Gastrocnemius medialis (tissue), 4 donors: ENCODE measurements at regions of chr6 and their contacts with region 1.

Region 1: DNA sequence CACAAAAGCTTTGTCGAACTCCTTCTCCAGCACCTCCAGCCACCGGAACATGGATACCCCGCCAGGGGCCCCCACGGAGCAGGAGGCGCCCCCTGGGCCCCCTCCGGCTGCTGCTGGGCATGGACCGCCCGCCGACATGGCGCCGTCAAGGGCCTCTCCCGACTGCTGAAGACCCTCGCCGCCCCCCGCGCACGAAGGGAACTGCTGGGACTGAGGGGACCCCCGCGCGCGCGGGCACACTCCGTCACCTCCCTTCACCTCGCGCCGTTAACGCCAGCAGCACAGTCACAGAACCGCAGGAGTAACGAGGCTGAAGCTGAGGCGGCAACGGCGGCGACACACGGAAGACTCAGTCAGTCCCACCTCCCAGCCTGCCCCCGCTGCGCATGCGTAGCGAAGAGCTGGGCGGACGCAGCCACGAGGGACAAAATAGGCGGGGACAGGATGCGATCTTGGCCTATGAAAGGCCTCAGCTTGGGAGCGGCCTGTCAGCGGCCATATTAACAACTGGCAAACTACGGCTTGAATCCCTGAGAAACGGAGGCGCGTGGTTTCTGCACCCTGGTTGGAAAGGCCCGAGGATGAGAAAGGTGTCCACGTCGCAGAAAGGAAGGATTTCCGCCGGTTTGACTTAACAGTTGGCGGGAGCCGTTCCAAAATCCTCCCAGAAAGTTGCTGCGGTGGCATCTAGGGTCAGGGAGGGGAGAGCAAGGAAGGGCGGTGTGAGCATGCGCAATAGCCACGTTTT is at the start of gene GOPC:
- DNase-seq: peak; percentile 95 to 97
- ATAC-seq: peak; percentile 97 to 99
- H3K4me3 ChIP-seq: peak within 1 kb of the TSS; percentile 87 to 99 (median 92)
- H3K27ac ChIP-seq: peak within 1 kb of the TSS; percentile 93 to 94 (median 93)
- H3K4me1 ChIP-seq: peaks cover 22 to 27% of the 10 kb centered on the region in 2 donors
- H3K27me3 ChIP-seq: no peaks in the 10 kb centered on the region
- CTCF ChIP-seq: peak in 2 of 5 experiments; percentile 10 to 19
- POLR2A ChIP-seq: peak; percentile 80 to 85
- total RNA-seq, gene GOPC: 12.0 to 19.3 (median 13.6) TPM

Region 2: GRCh38 chr6:117346142-117346930 is 256.0 kb before region 1 on chr6:
- in situ Hi-C with region 1: loop called in 3 of 4 experiments (anchors 10 to 25 kb)
- intact Hi-C with region 1: loop called (anchors 2 kb)
- DNase-seq: no peak
- ATAC-seq: peak; percentile 33 to 44
- H3K4me3 ChIP-seq: peak overlapping the region in 2 of 4 donors; percentile 11 to 18
- H3K27ac ChIP-seq: no peak overlapping the region
- H3K4me1 ChIP-seq: no peaks in the 10 kb centered on the region
- H3K27me3 ChIP-seq: no peaks in the 10 kb centered on the region
- CTCF ChIP-seq: peak in 4 of 5 experiments; percentile 23 to 55 (median 53)
- POLR2A ChIP-seq: no peak

Region 3: DNA sequence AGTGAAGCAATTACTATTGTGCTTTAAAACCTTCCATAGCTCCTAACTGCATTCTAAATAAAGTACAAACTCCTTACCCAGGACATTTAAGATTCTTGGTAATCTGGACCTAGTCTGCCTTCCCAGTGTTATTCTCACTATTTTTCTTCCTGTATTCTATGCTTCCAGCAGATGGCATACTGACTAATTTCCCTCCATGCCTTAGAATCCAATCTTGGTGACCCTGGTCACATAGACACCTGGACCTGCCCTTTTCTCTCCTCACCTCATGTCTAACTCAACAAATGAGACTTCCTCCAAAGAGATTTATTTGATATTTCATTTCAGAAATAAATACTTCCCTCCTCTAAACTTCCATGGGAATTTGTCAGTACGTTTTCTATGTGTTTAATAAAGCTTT is 202.4 kb before region 1 on chr6:
- in situ Hi-C with region 1: no loop called
- intact Hi-C with region 1: loop called (anchors 1 kb)
- DNase-seq: no peak
- ATAC-seq: no peak
- H3K4me3 ChIP-seq: no peak overlapping the region
- H3K27ac ChIP-seq: no peak overlapping the region
- H3K4me1 ChIP-seq: peaks cover 3 to 11% of the 10 kb centered on the region in 2 donors
- H3K27me3 ChIP-seq: no peaks in the 10 kb centered on the region
- CTCF ChIP-seq: no peak
- POLR2A ChIP-seq: no peak

Region 4: DNA sequence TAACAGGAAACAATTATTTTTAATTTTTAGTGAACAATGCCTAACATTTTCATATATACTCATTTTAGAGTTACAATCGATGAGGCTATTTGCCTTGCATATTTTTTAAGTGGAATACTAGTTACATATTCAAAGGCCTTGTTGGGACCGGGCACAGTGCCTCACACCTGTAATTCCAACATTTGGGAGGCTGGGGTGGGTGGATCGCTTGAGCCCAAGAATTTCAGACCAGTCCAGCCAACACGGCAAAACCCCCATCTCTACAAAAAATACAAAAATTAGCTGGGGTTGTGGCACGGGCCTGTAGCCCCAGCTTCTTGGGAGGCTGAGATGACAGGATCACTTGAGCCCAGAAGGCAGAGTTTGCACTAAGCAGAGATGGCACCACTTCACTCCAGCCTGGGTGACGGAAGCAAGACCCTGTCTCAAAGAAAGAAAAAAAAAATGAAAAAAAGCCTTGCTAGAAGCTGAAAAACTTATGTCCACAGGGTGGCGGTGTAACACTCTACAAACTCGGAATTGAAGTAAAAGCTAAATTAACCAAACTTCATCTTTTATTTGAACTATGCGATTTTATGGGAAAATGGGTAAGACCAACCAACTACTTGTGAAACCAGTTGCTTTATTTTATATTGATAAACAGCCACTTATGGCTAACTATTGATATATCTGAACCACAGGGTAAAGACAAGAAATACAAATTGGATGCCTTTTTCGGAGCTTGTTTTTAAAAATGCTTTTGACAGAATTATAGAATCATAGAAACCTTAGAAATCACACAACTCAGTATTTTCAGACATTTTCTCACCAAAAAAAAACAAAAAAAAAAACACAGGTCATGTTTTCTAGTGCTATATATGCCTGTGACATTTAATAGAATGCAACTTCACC is 152.5 kb before region 1 on chr6:
- in situ Hi-C with region 1: no loop called
- intact Hi-C with region 1: loop called (anchors 1 kb)
- DNase-seq: peak; percentile 6 to 12
- ATAC-seq: no peak
- H3K4me3 ChIP-seq: no peak overlapping the region
- H3K27ac ChIP-seq: no peak overlapping the region
- H3K4me1 ChIP-seq: peaks cover 0 to 6% of the 10 kb centered on the region in 2 donors
- H3K27me3 ChIP-seq: no peaks in the 10 kb centered on the region
- CTCF ChIP-seq: peak; percentile 52 to 78 (median 66)
- POLR2A ChIP-seq: no peak

Region 5: DNA sequence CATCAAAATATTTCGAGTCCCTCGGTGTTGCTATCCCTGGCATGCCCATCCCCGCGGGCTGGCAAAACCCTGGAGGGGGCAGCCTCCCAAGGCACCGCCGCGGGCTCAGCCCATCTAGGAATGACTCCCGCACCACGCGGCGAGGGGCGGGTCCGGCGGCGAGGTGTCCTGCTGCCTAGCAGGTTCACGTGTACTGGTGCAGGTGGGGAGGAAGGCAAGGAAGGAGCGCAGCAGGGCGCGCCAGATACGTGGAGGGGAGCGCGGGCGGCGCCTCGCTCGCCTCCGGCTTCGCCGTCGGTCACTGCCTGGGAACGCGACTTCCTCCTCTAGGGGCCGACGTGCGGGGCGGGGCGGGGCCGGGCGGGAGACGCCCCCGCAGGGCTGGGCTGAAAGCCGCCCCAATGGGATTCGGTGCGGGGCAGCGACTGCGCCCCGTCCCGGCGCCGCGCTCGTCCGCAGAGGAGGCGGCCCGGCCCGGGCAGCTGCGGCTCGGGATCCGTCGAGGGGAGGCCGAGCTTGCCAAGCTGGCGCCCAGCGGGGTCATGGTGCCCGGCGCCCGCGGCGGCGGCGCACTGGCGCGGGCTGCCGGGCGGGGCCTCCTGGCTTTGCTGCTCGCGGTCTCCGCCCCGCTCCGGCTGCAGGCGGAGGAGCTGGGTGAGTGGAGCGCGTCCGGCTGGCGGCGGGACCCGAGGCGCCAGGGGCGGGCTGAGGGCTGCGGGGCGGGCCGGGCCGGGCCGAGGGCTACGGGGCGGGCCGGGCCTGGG is 119.9 kb before region 1 on chr6 and contains the start of gene DCBLD1:
- in situ Hi-C with region 1: no loop called
- intact Hi-C with region 1: loop called (anchors 2 kb)
- DNase-seq: peak; percentile 32 to 61
- ATAC-seq: peak; percentile 73 to 83
- H3K4me3 ChIP-seq: peak within 1 kb of the TSS; percentile 65 to 95 (median 82)
- H3K27ac ChIP-seq: peak within 1 kb of the TSS; percentile 89 to 92 (median 91)
- H3K4me1 ChIP-seq: peaks cover 13 to 19% of the 10 kb centered on the region in 2 donors
- H3K27me3 ChIP-seq: no peaks in the 10 kb centered on the region
- CTCF ChIP-seq: peak in 1 of 5 experiments; percentile 26
- POLR2A ChIP-seq: peak; percentile 52 to 75
- total RNA-seq, gene DCBLD1: 4.3 to 8.1 (median 5.2) TPM

Region 6: DNA sequence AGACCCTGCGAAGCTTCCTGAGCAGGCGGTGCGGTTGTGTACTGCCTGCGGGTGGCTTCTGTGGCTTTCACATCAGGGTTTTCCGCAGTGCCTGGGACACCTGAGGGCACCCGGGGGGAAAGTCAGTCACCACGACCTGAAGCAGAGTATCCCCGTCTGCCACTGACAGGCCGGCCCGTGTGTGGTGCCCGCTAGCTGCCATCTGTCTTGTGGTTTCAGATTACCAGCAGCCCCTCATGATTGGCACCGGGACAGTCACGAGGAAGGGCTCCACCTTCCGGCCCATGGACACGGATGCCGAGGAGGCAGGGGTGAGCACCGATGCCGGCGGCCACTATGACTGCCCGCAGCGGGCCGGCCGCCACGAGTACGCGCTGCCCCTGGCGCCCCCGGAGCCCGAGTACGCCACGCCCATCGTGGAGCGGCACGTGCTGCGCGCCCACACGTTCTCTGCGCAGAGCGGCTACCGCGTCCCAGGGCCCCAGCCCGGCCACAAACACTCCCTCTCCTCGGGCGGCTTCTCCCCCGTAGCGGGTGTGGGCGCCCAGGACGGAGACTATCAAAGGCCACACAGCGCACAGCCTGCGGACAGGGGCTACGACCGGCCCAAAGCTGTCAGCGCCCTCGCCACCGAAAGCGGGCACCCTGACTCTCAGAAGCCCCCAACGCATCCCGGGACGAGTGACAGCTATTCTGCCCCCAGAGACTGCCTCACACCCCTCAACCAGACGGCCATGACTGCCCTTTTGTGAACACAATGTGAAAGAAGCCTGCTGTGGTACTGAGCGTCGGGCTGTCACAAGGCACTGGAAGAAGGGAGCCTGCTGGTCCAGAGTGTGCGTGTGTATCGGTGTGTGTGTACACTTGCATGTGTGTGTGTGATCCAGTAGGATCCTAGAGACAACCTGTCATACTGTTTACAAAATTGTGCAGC is 54.4 kb before region 1 on chr6:
- in situ Hi-C with region 1: no loop called
- intact Hi-C with region 1: loop called (anchors 5 kb)
- DNase-seq: peak; percentile 77 to 88
- ATAC-seq: peak; percentile 76 to 87
- H3K4me3 ChIP-seq: peak overlapping the region; percentile 54 to 71 (median 64)
- H3K27ac ChIP-seq: peak overlapping the region; percentile 78 to 88 (median 84)
- H3K4me1 ChIP-seq: peaks cover 20 to 23% of the 10 kb centered on the region in 2 donors
- H3K27me3 ChIP-seq: no peaks in the 10 kb centered on the region
- CTCF ChIP-seq: peak in 1 of 5 experiments; percentile 10
- POLR2A ChIP-seq: peak; percentile 43 to 63

Region 7: DNA sequence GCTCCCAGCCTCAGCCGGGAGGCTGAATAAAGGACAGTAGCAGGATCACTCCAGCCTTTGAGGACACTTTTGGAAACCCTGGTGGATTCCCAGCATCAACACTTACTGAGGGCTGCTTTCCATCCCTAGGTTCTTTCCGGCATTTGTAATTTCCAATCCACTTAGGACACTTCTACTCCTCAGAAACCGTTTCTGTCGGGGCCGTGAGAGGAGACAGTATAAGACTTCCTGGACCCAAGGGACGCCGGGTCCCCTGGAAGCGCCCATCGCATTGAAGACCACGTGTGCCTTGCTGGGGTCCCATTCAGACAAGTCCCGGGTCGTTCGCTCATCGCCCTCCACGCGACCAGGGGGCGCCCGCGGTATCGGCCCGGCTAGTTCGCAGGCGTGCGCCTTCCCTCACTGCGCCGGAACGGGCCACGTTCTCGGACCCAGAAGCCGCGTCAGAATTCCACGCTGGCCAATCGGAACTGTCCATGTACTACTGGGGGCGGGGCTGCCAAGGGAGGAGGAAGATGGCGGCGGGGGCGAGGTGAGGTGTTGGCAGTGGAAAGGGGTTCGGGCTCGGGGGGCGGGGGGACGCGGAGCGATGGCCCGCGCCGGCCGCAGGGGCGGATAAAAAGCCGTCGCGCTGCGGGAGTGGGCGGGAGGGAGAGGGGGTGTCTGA is 72.8 kb after region 1 on chr6 and contains the start of gene NUS1:
- in situ Hi-C with region 1: loop called in 1 of 4 experiments (anchors 10 kb)
- intact Hi-C with region 1: loop called (anchors 2 kb)
- DNase-seq: peak; percentile 90 to 96
- ATAC-seq: peak; percentile 97 to 98
- H3K4me3 ChIP-seq: peak within 1 kb of the TSS; percentile 65 to 93 (median 76)
- H3K27ac ChIP-seq: peak within 1 kb of the TSS; percentile 84 to 90 (median 89)
- H3K4me1 ChIP-seq: peaks cover 26 to 28% of the 10 kb centered on the region in 2 donors
- H3K27me3 ChIP-seq: no peaks in the 10 kb centered on the region
- CTCF ChIP-seq: peak; percentile 31 to 80 (median 66)
- POLR2A ChIP-seq: peak; percentile 51 to 53
- total RNA-seq, gene NUS1: 7.1 to 10.5 (median 7.6) TPM

Region 8: GRCh38 chr6:117791012-117791411 is 188.7 kb after region 1 on chr6:
- in situ Hi-C with region 1: no loop called
- intact Hi-C with region 1: no loop called
- DNase-seq: no peak
- ATAC-seq: no peak
- H3K4me3 ChIP-seq: no peak overlapping the region
- H3K27ac ChIP-seq: no peak overlapping the region
- H3K4me1 ChIP-seq: no peaks in the 10 kb centered on the region
- H3K27me3 ChIP-seq: no peaks in the 10 kb centered on the region
- CTCF ChIP-seq: no peak
- POLR2A ChIP-seq: no peak